HepG2 (cell line): ENCODE measurements at regions of chr17 and their contacts with region 1.

Region 1: DNA sequence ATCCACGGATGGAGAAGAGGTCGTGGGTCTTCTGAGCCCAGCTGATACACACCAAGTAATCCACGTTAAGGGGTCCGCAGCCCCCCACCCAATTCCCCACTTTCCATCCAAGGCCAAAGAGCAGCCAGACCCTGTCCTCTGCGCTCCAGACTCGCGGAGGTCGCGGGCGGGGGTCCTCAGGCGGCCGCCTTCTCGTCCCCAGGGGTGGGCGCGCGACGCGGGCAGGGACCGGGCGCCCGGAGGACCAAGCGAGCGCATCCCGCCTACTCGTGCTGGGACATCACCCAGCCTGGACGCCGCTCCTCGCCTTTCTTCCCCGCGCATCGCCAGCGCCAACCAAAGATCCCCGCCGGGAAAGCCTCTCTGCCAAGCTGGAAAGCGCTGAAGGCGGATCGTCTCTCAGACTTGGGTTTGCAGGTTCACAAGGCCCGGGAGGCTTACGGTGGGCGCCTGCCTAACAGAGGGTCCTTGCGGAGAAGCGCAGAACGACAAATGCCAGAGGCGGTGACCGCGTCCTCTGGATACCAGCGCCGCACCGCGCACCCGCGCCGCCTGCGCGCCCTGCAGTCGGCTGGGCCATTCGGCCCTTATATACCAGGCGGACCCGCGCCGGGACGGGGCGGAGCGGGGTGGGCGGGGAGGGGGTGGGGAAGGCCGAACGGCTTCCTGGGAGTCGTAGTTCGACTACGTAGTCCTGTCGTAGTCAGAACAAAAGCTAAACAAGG is 471.6 kb downstream of the SOX9 start:
- DNase-seq: peak; percentile 78
- ATAC-seq: peak; percentile 87
- H3K4me3 ChIP-seq: peak overlapping the region; percentile 93 to 99 (median 98)
- H3K27ac ChIP-seq: peak overlapping the region; percentile 58
- H3K4me1 ChIP-seq: peaks cover 39% of the 10 kb centered on the region
- H3K27me3 ChIP-seq: no peaks in the 10 kb centered on the region; a peak in 1 of 5 replicates
- CTCF ChIP-seq: peak; percentile 55
- EP300 ChIP-seq: peak; percentile 42 to 52; a peak in 2 of 4 replicates
- POLR2A ChIP-seq: peak; percentile 100
- RAD21 ChIP-seq: peak; percentile 83

Region 2: GRCh38 chr17:72569148-72569946 is 23.1 kb before region 1 on chr17:
- CTCF ChIA-PET with region 1: no interaction called
- POLR2A ChIA-PET with region 1: interaction called, 16 read pairs
- in situ Hi-C with region 1: no loop called
- intact Hi-C with region 1: loop called (anchors 2 kb)
- DNase-seq: peak; percentile 70
- ATAC-seq: peak; percentile 68
- H3K4me3 ChIP-seq: peak overlapping the region in 1 of 3 experiments; percentile 47; a peak in 2 of 6 replicates
- H3K27ac ChIP-seq: peak overlapping the region; percentile 37
- H3K4me1 ChIP-seq: peaks cover 95% of the 10 kb centered on the region
- H3K27me3 ChIP-seq: no peaks in the 10 kb centered on the region
- CTCF ChIP-seq: peak; percentile 57
- EP300 ChIP-seq: no peak
- POLR2A ChIP-seq: no peak
- RAD21 ChIP-seq: 0 out of 2 replicates have a peak, but pooled peaks have one; percentile 14

Region 3: GRCh38 chr17:72602517-72603419 is 10.4 kb after region 1 on chr17:
- CTCF ChIA-PET with region 1: no interaction called
- POLR2A ChIA-PET with region 1: interaction called, 71 read pairs
- in situ Hi-C with region 1: no loop called
- intact Hi-C with region 1: no loop called
- DNase-seq: no peak
- ATAC-seq: peak; percentile 70
- H3K4me3 ChIP-seq: peak overlapping the region; percentile 9 to 52 (median 11)
- H3K27ac ChIP-seq: no peak overlapping the region
- H3K4me1 ChIP-seq: peaks cover 54% of the 10 kb centered on the region
- H3K27me3 ChIP-seq: no peaks in the 10 kb centered on the region
- CTCF ChIP-seq: no peak
- EP300 ChIP-seq: no peak
- POLR2A ChIP-seq: no peak
- RAD21 ChIP-seq: no peak

Region 4: DNA sequence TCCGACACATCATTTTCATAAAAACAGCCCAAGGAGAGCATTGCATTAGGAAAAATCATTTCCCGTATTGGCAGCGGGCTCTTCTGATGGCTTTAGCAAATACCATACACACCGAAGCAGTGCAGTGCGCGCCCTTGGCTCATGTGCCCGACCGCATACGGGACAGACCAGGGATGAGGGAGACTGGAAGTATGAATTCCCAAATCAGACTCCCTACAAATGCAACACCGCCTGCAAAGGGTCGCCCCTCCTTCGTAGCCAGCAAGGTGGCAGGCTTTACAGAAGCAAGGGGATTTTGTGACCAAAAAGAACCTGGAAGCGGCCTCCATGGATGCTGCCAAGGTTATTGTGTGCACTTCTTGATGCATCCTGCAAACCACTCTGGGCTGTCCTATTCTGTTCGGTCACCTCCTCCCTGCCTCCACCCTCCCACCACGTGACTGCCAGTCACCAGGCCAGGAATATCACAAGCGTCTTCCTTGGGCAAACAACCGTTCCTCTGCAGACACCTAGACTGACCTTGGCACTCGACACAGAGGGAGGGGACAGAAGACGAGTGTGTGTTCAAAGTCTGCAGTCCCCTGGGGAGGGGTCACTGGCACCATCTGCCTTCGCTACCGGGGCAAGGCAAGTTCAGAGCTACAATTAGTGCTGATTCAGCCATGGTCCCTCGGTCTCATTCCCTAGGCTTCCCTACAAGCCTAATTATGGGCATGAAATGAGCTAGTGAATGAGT is 39.7 kb after region 1 on chr17:
- CTCF ChIA-PET with region 1: no interaction called
- POLR2A ChIA-PET with region 1: interaction called, 48 read pairs
- in situ Hi-C with region 1: no loop called
- intact Hi-C with region 1: loop called (anchors 1 kb)
- DNase-seq: peak; percentile 98
- ATAC-seq: peak; percentile 93
- H3K4me3 ChIP-seq: peak overlapping the region; percentile 41 to 68 (median 47)
- H3K27ac ChIP-seq: peak overlapping the region; percentile 51
- H3K4me1 ChIP-seq: peaks cover 56% of the 10 kb centered on the region
- H3K27me3 ChIP-seq: no peaks in the 10 kb centered on the region
- CTCF ChIP-seq: peak; percentile 70
- EP300 ChIP-seq: peak; percentile 79 to 96; a peak in 3 of 4 replicates
- POLR2A ChIP-seq: peak; percentile 49 to 74; a peak in 3 of 4 replicates
- RAD21 ChIP-seq: no peak; the same call in 1 of the 2 replicates

Region 5: DNA sequence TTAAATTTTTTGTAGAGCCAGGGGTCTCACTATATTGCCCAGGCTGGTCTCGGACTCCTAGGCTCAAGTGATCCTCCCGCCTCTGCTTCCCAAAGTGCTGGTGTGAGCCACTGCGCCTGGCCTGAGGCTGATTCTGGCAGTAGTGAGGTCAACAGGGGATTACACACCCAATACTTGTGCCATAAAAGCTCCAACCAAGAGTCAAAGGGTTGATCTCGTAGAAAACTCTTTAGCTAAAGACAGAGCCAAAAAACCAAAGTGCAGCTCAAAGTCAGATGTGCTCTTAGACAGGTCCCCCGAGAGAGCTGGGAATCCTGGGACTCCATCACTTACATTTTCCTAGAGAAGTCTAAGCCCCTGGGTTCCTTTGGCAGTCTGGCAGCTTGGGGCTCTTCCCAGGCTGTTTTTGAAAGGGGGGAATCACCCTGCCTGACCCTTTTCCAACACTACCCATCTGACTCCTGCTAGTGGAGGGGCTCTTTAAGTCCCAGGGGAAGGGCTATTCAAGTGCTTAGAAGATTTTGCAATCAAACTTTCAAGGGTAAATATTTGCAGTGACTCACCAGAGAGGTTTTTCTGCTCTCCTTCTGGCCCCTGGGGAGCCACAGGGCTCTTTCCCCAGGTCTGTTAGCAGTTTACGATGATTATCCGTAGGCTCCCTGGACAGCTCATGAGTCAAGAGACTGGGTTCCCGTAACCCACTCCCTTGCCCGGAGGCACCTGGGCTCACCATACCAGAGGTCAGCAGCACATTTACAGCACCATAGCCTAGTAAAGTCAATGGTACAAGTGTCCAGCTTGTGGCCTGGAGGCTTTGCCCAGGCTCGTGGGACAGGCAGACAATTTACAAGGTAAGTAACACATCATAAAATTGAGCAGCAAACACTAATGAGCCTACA is 91.4 kb after region 1 on chr17:
- CTCF ChIA-PET with region 1: no interaction called
- POLR2A ChIA-PET with region 1: interaction called, 33 read pairs
- in situ Hi-C with region 1: no loop called
- intact Hi-C with region 1: loop called (anchors 1 kb)
- DNase-seq: peak; percentile 97
- ATAC-seq: peak; percentile 92
- H3K4me3 ChIP-seq: peak overlapping the region; percentile 24 to 63 (median 48); a peak in 5 of 6 replicates
- H3K27ac ChIP-seq: peak overlapping the region; percentile 57
- H3K4me1 ChIP-seq: peaks cover 57% of the 10 kb centered on the region
- H3K27me3 ChIP-seq: no peaks in the 10 kb centered on the region
- CTCF ChIP-seq: no peak; the same call in 1 of the 2 replicates
- EP300 ChIP-seq: peak; percentile 77 to 93; a peak in 3 of 4 replicates
- POLR2A ChIP-seq: 0 out of 4 replicates have a peak, but pooled peaks of 1 of the 2 experiments have one; percentile 33
- RAD21 ChIP-seq: no peak

Region 6: GRCh38 chr17:73203135-73203787 is 610.9 kb after region 1 on chr17:
- CTCF ChIA-PET with region 1: no interaction called
- POLR2A ChIA-PET with region 1: interaction called, 3 read pairs
- in situ Hi-C with region 1: no loop called
- intact Hi-C with region 1: loop called (anchors 5 kb)
- DNase-seq: peak; percentile 96
- ATAC-seq: peak; percentile 41
- H3K4me3 ChIP-seq: peak overlapping the region in 2 of 3 experiments; percentile 2 to 36; a peak in 1 of 6 replicates
- H3K27ac ChIP-seq: peak overlapping the region; percentile 83
- H3K4me1 ChIP-seq: peaks cover 70% of the 10 kb centered on the region
- H3K27me3 ChIP-seq: no peaks in the 10 kb centered on the region
- CTCF ChIP-seq: no peak
- EP300 ChIP-seq: peak in 1 of 2 experiments; percentile 68; a peak in 2 of 4 replicates
- POLR2A ChIP-seq: peak; percentile 25 to 39; a peak in 1 of 4 replicates
- RAD21 ChIP-seq: no peak